Mammary epithelial cell (primary cell): ENCODE measurements at regions of chr2 and their contacts with region 1.

Region 1: DNA sequence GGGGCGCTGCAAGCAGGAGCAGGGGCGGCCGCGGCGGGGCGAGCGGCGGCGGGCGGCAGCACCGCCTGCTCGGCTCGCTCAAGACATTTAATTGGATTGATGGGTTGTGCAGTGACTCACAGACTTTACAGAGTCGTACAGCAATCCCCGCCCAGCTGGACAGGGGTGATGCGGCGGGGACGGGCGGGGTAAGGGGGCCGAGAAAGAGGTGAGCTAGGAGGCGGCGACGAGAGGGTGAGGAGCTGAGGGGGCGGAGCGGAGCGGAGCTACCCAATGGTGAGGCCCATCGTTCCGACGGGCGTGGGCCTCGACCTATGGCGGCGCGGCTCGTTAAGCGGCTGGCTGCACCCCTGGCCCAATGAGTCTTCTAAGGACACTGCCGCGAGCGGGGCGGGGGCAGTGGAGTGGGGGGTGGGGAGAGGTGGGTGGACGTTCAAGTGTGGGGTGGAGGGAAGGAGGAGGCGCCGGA is 97.1 kb upstream of the SERTAD2 start:
- DNase-seq: peak; percentile 100
- H3K4me3 ChIP-seq: peak overlapping the region; percentile 77 to 86 (median 86)
- H3K27ac ChIP-seq: peak overlapping the region; percentile 79
- H3K4me1 ChIP-seq: peaks cover 28% of the 10 kb centered on the region
- H3K27me3 ChIP-seq: no peaks in the 10 kb centered on the region
- CTCF ChIP-seq: peak in 1 of 2 donors; percentile 18

Region 2: DNA sequence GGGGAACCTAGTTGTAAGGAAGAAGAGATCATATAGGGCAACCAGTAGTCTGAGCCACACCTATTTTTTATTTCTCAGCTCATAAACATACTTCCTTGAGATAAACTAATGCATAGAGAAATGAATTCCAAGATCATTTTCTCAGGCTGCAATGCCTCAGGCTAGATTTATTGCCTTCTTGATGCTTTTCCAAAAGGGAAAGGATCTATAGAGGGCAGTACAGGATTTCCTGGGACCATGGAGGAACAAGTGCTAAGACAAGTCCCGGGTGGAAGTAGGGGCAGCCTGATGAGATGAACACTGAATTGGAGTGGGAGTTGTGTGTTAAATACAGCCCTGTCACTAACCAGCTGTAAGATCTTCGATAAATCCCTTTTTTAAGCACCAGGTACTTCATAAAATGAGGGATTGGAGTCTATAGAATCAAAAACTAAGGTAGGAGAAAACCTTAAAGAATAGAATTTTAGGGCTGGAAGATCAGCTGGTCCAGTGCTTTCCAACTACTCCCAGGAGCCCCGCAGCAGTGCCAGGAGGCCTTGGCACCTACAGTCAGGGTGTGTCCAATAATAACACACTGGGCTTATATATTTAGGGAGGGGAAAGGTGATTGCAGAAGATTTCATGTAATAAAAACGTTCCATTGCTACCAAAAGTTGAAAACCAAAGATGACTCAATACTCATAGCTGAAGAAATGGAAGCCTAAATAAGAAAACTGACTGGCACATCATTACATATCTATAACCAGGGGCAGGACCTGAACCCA is 155.3 kb before region 1 on chr2:
- CTCF ChIA-PET with region 1: no interaction called
- dilution Hi-C with region 1: no loop called
- in situ Hi-C with region 1: no loop called
- intact Hi-C with region 1: loop called (anchors 5 kb)
- DNase-seq: no peak
- H3K4me3 ChIP-seq: no peak overlapping the region
- H3K27ac ChIP-seq: no peak overlapping the region
- H3K4me1 ChIP-seq: peaks cover 13% of the 10 kb centered on the region
- H3K27me3 ChIP-seq: no peaks in the 10 kb centered on the region
- CTCF ChIP-seq: peak; percentile 19 to 40

Region 3: DNA sequence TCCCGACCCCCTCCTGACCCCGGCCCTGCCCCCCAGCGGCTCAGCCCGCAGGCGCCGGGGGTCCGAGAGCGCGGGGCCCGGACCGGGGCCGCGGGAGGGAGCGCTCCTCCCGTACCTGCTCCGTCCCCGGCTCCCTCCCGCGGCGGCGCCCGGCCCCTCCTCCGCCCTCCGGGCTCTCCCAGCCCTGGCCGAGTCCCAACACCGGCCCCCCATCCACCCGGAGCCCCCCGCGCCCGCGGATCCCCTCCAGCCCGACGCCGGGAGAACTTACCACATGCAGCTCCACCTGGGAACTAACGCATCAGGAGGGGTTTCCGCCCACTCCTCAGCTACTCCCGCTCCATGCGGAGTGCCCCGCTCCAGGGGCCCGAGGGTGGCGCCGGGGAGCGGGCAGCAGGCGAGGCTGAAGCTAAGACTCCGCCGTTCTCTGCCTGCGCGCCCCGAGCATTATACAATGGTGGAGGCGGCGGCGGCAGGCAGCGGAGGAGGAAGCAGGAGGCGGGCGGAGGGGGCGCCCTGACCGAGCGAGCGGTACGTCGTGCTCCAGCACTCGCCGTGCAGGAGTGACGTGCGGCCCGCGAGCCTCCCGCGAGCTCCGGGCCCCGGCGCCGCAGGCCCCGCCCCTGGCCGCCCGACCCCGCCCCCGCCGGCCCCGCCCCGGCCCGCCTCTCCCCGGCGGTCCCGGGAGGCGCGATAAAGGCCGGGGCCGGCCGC is 97.3 kb before region 1 on chr2 and contains the start of gene SERTAD2:
- CTCF ChIA-PET with region 1: interaction called, 9 read pairs
- dilution Hi-C with region 1: no loop called
- in situ Hi-C with region 1: loop called in 1 of 2 experiments (anchors 10 kb)
- intact Hi-C with region 1: loop called (anchors 1 kb)
- DNase-seq: peak; percentile 83
- H3K4me3 ChIP-seq: peak within 1 kb of the TSS; percentile 91 to 94 (median 92)
- H3K27ac ChIP-seq: peak within 1 kb of the TSS; percentile 82
- H3K4me1 ChIP-seq: peaks cover 39% of the 10 kb centered on the region
- H3K27me3 ChIP-seq: no peaks in the 10 kb centered on the region
- CTCF ChIP-seq: peak in 1 of 2 donors; percentile 22
- total RNA-seq, gene SERTAD2: 16.0 to 24.2 TPM

Region 4: GRCh38 chr2:64767670-64768468 is 17.0 kb after region 1 on chr2:
- CTCF ChIA-PET with region 1: no interaction called
- dilution Hi-C with region 1: no loop called
- in situ Hi-C with region 1: no loop called
- intact Hi-C with region 1: loop called (anchors 1 kb)
- DNase-seq: peak; percentile 86
- H3K4me3 ChIP-seq: peak overlapping the region; percentile 57 to 75 (median 67)
- H3K27ac ChIP-seq: peak overlapping the region; percentile 86
- H3K4me1 ChIP-seq: peaks cover 28% of the 10 kb centered on the region
- H3K27me3 ChIP-seq: no peaks in the 10 kb centered on the region
- CTCF ChIP-seq: peak in 1 of 2 donors; percentile 0

Region 5: DNA sequence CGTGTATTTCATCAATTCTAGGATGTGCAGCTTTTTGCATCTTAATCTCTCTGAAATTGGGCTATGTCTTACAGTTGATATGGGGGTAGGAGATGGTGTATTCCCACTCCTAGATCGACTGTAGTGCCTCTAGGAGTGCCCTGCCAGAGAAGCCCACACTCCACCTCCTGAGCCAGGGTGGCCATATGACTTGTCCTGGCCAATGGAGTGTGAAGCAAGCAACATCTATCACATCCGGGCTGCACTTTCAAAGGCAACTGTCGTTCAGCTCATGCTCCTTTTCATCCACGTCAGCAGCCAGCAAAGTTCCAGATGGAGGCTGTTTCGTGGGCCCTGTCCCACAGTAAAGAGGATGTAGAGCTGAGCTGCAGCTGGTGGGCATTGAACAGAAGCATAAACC is 89.0 kb after region 1 on chr2:
- CTCF ChIA-PET with region 1: interaction called, 15 read pairs
- dilution Hi-C with region 1: no loop called
- in situ Hi-C with region 1: no loop called
- intact Hi-C with region 1: loop called (anchors 1 kb)
- DNase-seq: no peak
- H3K4me3 ChIP-seq: no peak overlapping the region
- H3K27ac ChIP-seq: peak overlapping the region; percentile 66
- H3K4me1 ChIP-seq: peaks cover 37% of the 10 kb centered on the region
- H3K27me3 ChIP-seq: no peaks in the 10 kb centered on the region
- CTCF ChIP-seq: no peak

Region 6: GRCh38 chr2:64865073-64865830 is 114.4 kb after region 1 on chr2:
- CTCF ChIA-PET with region 1: no interaction called
- dilution Hi-C with region 1: no loop called
- in situ Hi-C with region 1: loop called in 1 of 2 experiments (anchors 5 kb)
- intact Hi-C with region 1: loop called (anchors 1 kb)
- DNase-seq: peak; percentile 45
- H3K4me3 ChIP-seq: peak overlapping the region; percentile 41 to 50 (median 48)
- H3K27ac ChIP-seq: peak overlapping the region; percentile 45
- H3K4me1 ChIP-seq: peaks cover 22% of the 10 kb centered on the region
- H3K27me3 ChIP-seq: no peaks in the 10 kb centered on the region
- CTCF ChIP-seq: peak; percentile 37 to 50